KBM-7 (cell line): ENCODE measurements at regions of chr6 and their contacts with region 1.

Region 1: GRCh38 chr6:106444777-106445507 is 84.4 kb downstream of the CRYBG1 start:
- DNase-seq: peak; percentile 69

Region 2: DNA sequence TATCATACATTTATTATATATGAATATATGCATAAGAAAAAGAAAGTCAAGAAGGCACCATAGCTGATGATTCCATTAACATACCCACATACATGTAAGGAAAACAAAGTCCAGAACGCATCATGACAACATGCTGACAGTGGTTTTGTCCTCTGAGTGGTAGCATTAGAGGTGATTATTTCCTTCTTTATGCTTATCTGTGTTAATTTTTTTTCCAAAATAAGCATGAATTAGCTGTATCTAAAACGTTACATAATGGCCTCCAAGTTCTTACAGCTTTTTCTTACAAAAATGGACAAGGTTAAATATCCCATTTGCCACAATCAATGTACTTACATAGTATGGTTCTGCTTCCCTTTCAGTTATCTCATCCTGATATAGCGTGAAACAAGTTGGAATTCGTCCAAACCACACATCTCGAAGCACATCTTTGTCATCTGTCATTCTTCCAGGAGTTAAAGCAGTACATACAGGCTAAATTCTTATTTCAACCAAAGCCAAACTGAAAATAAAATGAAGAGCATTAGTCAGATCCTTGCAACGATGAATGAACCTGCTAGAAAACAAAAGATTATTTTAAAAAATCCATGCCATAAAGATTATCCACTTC is 129.1 kb before region 1 on chr6:
- in situ Hi-C with region 1: no loop called
- DNase-seq: peak; percentile 73

Region 3: GRCh38 chr6:106556368-106556960 is 111.5 kb after region 1 on chr6:
- in situ Hi-C with region 1: loop called (anchors 10 kb)
- DNase-seq: no peak

Region 4: GRCh38 chr6:106702451-106703110 is 257.6 kb after region 1 on chr6:
- in situ Hi-C with region 1: no loop called
- DNase-seq: peak; percentile 63

Region 5: DNA sequence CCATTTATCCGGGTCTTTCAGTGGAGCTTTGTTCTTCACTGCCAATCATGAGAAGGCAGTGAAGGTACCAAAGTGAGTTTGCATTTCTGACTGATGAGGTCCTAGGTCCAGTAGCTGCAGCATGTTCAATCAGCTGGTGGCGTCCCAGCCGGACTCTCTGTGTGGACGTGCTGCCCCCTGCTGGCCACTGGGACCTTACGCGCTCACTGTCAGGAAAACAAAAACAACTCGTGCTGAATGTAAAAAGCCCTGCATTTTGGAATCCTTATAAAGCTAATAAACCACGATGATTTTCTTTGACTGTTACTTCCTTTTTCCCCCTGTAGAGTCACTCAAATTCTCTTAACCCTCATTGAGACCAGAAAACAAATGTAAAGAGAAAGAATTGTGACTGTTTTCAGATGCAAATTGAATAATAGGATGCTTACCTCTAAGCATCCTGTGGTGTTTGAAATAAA is 534.5 kb after region 1 on chr6:
- in situ Hi-C with region 1: loop called (anchors 25 kb)
- DNase-seq: peak; percentile 82